ENCODE measurements at regions of chr3 and their contacts with region 1.

Region 1: DNA sequence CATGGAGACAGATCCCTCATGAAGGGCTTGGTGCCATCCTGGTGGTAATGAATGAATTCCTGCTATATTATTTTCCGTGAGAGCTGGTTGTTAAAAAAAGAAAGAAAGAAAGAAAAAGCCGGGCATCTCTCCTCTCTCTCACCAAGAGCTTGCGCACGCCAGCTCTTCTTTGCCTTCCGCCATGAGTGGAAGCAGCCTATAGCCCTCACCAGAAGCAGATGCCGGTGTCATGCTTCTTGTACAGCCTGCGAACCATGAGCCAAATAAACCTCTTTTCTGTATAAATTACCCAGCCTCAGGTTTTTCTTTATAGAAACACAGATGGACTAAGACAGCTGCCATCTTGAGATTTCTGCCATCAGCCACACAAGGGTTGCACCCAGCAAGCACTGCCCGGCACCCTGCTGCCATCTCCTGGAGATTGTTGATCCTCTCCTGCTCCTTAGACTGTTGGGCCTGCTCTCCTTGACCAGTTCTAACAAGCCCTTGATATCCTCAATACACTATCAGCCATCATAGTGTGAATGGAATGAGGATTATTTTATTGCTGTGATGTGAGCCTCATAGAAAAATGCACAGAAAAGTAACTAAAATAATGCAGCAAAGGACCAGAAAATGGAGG is 3.5 kb upstream of the AHSG start:
- DNase-seq: peak in 1 of 2 experiments; percentile 21
- H3K4me3 ChIP-seq: no peak overlapping the region
- H3K4me1 ChIP-seq: no peaks in the 10 kb centered on the region
- H3K27me3 ChIP-seq: peaks cover 4% of the 10 kb centered on the region

Region 2: GRCh38 chr3:186759231-186759930 is 150.0 kb after region 1 on chr3:
- in situ Hi-C with region 1: loop called (anchors 10 kb)
- DNase-seq: peak in 1 of 2 experiments; percentile 24
- H3K4me3 ChIP-seq: no peak overlapping the region
- H3K4me1 ChIP-seq: no peaks in the 10 kb centered on the region
- H3K27me3 ChIP-seq: no peaks in the 10 kb centered on the region